Naive thymus-derived CD8-positive, alpha-beta T cell (primary cell): ENCODE measurements at regions of chr2 and their contacts with region 1.

Region 1: GRCh38 chr2:238231251-238231793 is 8.5 kb downstream of the HES6 start:
- DNase-seq: peak; percentile 65 to 87 (median 77)
- ATAC-seq: peak; percentile 91
- H3K4me3 Mint-ChIP-seq: peak overlapping the region; percentile 68 to 93 (median 90)
- H3K27ac Mint-ChIP-seq: peak overlapping the region in 7 of 10 donors; percentile 6 to 91 (median 65)
- H3K4me1 Mint-ChIP-seq: peaks cover 29 to 58% (median 42%) of the 10 kb centered on the region in 4 donors
- H3K27me3 Mint-ChIP-seq: peaks cover 10 to 17% (median 14%) of the 10 kb centered on the region in 5 donors

Region 2: DNA sequence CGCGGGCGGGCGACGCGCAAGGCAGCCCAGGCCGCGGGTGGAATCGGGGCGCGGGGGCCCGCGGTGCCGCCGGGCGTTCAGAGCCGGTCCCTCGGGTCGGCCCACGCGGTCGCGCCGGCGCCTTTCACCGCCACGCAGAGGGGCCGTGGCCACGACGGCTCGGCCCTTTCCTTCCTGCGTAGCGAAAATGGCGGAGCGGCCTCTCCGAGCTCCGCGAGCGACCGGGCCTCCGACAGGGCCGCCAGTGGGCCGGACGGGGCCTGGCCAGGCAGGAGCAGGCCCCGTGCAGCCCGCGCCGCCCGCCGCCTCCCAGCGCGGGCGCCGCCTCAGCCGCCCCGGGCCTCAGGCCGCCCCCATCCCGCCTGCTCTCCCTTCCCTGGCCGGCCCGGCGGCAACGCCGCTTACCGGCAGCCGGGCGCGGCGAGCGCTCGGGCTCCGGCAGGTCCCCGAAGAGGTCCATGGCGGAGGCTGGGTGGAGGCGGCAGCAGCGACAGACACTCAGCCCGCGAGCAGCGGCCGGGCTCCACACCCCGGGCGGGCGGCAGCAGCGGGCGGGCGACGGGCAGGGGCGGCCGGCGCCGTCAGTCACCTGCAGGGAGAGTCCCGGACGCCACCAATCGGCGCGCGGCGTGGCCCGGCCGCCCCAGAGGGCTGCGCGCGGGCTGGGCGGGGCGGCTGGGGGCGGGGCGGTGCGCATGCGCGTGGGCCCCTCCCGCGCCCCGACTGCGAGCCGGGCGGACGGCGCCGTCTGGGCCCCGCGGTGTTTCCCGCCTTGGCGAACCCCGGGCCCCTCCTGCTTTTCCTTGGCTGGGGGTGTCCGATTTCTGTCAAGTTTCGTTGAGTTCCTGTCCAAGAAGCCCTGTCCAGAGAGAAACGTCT is 28.0 kb before region 1 on chr2 and contains the start of gene ILKAP:
- POLR2A ChIA-PET with region 1: interaction called, 17 read pairs
- DNase-seq: peak; percentile 83 to 98 (median 90)
- ATAC-seq: peak; percentile 96
- H3K4me3 Mint-ChIP-seq: peak within 1 kb of the TSS; percentile 80 to 95 (median 88)
- H3K27ac Mint-ChIP-seq: peak within 1 kb of the TSS; percentile 84 to 97 (median 92)
- H3K4me1 Mint-ChIP-seq: peaks cover 21 to 53% (median 44%) of the 10 kb centered on the region in 4 donors
- H3K27me3 Mint-ChIP-seq: no peaks in the 10 kb centered on the region
- polyA plus RNA-seq, gene ILKAP: 39.1 to 42.1 (median 40.6) TPM

Region 3: DNA sequence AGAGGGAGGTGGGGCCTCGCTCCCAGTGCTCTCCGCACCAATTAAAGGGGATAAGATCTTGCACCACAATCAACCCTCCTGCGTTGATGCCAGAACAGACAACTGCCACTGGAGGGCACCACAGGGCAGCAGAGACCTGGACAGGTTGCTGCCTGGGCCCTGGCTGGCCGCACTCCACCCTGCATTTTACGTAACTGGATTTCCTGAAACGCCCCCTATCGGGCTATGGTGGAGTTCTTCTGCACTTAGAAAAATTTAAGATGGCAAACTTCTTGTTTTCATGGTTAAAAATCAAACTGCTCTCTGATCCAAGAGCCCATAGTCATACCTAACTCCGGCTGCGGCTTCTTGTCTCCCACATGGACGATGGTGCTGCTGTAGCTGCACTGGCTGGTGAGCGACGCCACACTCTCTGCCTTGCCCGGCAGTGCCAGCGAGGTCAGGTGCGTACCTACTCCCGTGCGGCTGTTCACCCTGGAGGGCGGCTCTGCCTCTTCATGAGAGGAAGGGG is 25.3 kb after region 1 on chr2:
- POLR2A ChIA-PET with region 1: no interaction called
- DNase-seq: peak; percentile 49 to 85 (median 66)
- ATAC-seq: peak; percentile 93 to 97
- H3K4me3 Mint-ChIP-seq: no peak overlapping the region
- H3K27ac Mint-ChIP-seq: peak overlapping the region in 3 of 10 donors; percentile 40 to 53 (median 51)
- H3K4me1 Mint-ChIP-seq: peaks cover 0 to 2% (median under 1%) of the 10 kb centered on the region in 4 donors
- H3K27me3 Mint-ChIP-seq: no peaks in the 10 kb centered on the region

Region 4: DNA sequence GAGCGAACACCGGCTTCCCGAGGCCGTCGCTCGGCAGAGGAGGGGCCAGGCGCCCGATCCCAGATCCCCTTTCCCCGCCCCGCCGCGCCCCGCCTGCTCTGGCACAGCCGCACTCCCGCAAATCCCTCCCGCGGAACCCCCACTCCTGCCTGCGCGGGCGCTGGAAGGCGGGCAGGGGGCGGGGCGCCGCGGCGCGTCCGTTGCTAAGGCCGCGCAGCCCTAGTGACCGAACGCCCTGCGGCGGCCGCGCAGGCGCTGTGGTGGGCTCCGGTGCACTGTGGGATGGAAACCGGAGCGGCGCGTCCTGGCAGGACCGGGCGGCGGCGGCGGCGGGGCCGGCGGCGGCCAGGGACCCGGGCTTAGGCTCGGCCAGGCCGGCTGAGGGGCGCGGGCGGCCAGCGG is 88.9 kb after region 1 on chr2 and contains the start of gene TRAF3IP1:
- POLR2A ChIA-PET with region 1: no interaction called
- DNase-seq: peak; percentile 73 to 92 (median 86)
- ATAC-seq: peak; percentile 93 to 97
- H3K4me3 Mint-ChIP-seq: peak within 1 kb of the TSS; percentile 75 to 90 (median 82)
- H3K27ac Mint-ChIP-seq: peak within 1 kb of the TSS in 7 of 10 donors; percentile 31 to 83 (median 73)
- H3K4me1 Mint-ChIP-seq: peaks cover 7 to 22% (median 15%) of the 10 kb centered on the region in 4 donors
- H3K27me3 Mint-ChIP-seq: peaks cover 0 to 5% (median 2%) of the 10 kb centered on the region in 5 donors
- polyA plus RNA-seq, gene TRAF3IP1: 4.8 to 6.7 (median 5.0) TPM